ENCODE measurements at regions of chr12 and their contacts with region 1.

Region 1: DNA sequence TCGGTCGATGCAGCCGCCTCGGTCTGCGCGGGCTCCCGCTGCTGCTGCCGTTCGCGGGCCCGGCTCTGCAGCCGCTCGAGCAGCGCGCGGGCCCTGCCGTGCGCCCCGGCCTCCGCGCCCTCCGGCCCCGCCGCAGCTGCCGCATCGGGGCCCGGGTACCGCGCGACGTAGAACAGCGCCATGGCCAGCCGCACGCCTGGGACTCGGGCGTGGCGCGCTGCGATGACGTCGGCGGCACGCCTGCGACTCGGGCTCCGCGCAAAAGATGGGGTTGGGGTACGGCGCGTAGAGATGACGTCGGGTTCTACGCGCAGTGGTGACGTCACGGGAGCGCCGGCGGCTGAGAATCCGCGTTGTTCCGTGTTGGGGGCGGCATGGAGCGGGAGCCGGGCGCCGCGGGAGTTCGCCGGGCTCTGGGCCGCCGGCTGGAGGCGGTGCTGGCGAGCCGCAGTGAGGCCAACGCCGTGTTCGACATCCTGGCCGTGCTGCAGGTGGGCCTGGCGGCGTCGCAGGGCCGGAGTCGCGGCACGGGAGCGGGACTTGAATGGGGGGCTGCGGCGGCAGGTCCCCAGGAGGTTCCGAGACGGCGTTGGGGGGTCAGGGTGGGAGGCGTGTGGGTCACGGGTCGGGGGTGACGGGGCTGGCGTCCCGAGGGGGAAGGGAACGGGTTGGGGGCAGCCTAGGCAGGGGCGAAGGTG is at the starts of genes DDX51 and NOC4L:
- DNase-seq: peak; percentile 74 to 96
- H3K4me3 ChIP-seq: peak within 1 kb of the TSS; percentile 97 to 99
- H3K27ac ChIP-seq: peak within 1 kb of the TSS; percentile 91 to 93
- H3K4me1 ChIP-seq: peaks cover 4 to 16% of the 10 kb centered on the region in 2 donors
- H3K27me3 ChIP-seq: no peaks in the 10 kb centered on the region
- CTCF ChIP-seq: no peak
- total RNA-seq, gene DDX51: 4.3 TPM
- total RNA-seq, gene NOC4L: 9.2 TPM

Region 2: GRCh38 chr12:131710464-131711457 is 433.5 kb before region 1 on chr12 and contains the start of gene SFSWAP:
- intact Hi-C with region 1: loop called (anchors 10 kb)
- DNase-seq: peak in 1 of 2 donors; percentile 78
- H3K4me3 ChIP-seq: peak within 1 kb of the TSS; percentile 69 to 73
- H3K27ac ChIP-seq: peak within 1 kb of the TSS; percentile 86 to 96
- H3K4me1 ChIP-seq: peaks cover 8 to 16% of the 10 kb centered on the region in 2 donors
- H3K27me3 ChIP-seq: no peaks in the 10 kb centered on the region
- CTCF ChIP-seq: no peak
- total RNA-seq, gene SFSWAP: 15.8 TPM

Region 3: GRCh38 chr12:132083941-132084620 is 60.2 kb before region 1 on chr12:
- intact Hi-C with region 1: loop called (anchors 2 kb)
- DNase-seq: peak; percentile 69 to 94
- H3K4me3 ChIP-seq: peak overlapping the region; percentile 75 to 82
- H3K27ac ChIP-seq: peak overlapping the region; percentile 88 to 93
- H3K4me1 ChIP-seq: peaks cover 4 to 16% of the 10 kb centered on the region in 2 donors
- H3K27me3 ChIP-seq: no peaks in the 10 kb centered on the region
- CTCF ChIP-seq: no peak